Spleen (tissue), 13 donors: ENCODE measurements at regions of chr12 and their contacts with region 1.

Region 1: GRCh38 chr12:5003020-5003666 is 40.5 kb upstream of the KCNA5 start:
- DNase-seq: peak; percentile 79
- H3K4me3 ChIP-seq: no peak overlapping the region
- H3K27ac ChIP-seq: no peak overlapping the region
- H3K4me1 ChIP-seq: no peaks in the 10 kb centered on the region
- H3K27me3 ChIP-seq: peaks cover 0 to 42% (median 0%) of the 10 kb centered on the region in 7 donors
- CTCF ChIP-seq: peak; percentile 63 to 87 (median 81)
- POLR2A ChIP-seq: no peak

Region 2: DNA sequence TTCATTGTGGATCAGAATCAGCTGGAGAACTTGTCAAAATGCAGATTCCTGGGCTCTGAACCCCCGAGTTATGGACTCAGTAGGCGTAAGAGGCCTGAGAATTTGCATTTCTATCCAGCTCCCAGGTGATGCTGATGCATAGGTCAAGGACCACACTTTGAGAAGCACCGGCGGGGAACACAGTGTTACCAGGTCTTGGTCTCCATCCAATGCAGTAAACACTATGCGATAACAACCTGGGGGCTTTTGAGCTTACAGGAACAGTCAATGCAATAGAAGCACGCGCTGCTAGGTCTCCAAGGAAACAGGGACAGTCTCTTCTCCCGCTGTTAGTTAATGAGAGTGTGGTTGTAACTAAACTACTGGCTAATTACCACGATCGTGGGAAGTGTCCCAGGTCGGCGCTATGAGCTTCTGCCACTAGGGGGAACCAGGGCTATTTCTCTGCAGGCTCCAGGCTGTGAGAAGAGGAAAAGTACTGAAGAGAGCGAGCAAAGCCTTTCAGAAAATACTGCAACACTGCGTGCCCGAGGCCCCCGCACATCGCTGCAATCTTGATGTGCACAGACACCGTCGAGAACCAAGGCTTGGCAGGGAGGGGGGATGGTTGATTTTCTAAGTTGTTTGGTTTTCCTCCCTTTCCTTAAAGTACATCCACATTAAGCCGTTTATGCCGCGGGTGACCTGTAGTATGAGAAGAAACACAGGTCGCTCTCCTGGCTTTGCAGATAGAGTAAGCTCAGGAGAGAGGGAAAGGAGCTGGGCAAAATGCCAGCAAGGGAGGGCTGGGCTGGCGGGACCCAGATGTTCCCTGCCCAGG is 145.5 kb before region 1 on chr12:
- intact Hi-C with region 1: loop called (anchors 5 kb)
- DNase-seq: peak; percentile 85
- H3K4me3 ChIP-seq: peak overlapping the region in 2 of 8 donors; percentile 17 to 55
- H3K27ac ChIP-seq: no peak overlapping the region
- H3K4me1 ChIP-seq: peaks cover 8 to 21% (median 12%) of the 10 kb centered on the region in 6 donors
- H3K27me3 ChIP-seq: peaks cover 0 to 62% (median 13%) of the 10 kb centered on the region in 7 donors
- CTCF ChIP-seq: peak; percentile 46 to 89 (median 79)
- POLR2A ChIP-seq: no peak